Transverse colon (tissue), 4 donors: ENCODE measurements at regions of chr22 and their contacts with region 1.

Region 1: DNA sequence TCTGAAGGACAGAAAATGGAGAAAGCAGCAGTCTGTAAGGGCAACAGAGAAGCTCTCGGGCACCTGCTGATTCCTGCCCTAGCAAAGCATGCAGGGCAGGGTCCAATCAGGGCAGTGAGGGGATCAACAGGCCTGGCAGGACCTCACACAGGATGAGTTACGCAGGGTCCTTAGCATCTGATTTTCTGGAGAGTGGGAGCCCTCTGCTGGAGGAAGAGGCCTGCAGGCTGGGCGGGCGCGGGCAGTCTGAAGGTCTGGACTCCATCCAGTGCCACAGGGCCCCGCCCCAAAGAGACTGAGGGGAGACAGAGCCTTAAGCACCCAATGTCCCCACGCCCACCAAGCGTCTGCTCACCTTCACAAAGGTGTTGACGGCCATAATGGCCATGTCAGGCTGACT is 28.9 kb downstream of the AP1B1 start:
- DNase-seq: peak; percentile 57
- H3K4me3 ChIP-seq: no peak overlapping the region
- H3K27ac ChIP-seq: peak overlapping the region in 1 of 4 donors; percentile 4
- H3K4me1 ChIP-seq: peaks cover 9 to 30% (median 13%) of the 10 kb centered on the region in 4 donors
- H3K27me3 ChIP-seq: no peaks in the 10 kb centered on the region
- CTCF ChIP-seq: peak; percentile 51 to 65 (median 56)
- EP300 ChIP-seq: no peak
- POLR2A ChIP-seq: no peak

Region 2: GRCh38 chr22:29225422-29226131 is 133.9 kb before region 1 on chr22:
- in situ Hi-C with region 1: no loop called
- intact Hi-C with region 1: no loop called
- DNase-seq: peak; percentile 33
- H3K4me3 ChIP-seq: no peak overlapping the region
- H3K27ac ChIP-seq: peak overlapping the region; percentile 57 to 69 (median 62)
- H3K4me1 ChIP-seq: peaks cover 0 to 16% (median 6%) of the 10 kb centered on the region in 4 donors
- H3K27me3 ChIP-seq: no peaks in the 10 kb centered on the region
- CTCF ChIP-seq: no peak
- EP300 ChIP-seq: no peak
- POLR2A ChIP-seq: no peak

Region 3: DNA sequence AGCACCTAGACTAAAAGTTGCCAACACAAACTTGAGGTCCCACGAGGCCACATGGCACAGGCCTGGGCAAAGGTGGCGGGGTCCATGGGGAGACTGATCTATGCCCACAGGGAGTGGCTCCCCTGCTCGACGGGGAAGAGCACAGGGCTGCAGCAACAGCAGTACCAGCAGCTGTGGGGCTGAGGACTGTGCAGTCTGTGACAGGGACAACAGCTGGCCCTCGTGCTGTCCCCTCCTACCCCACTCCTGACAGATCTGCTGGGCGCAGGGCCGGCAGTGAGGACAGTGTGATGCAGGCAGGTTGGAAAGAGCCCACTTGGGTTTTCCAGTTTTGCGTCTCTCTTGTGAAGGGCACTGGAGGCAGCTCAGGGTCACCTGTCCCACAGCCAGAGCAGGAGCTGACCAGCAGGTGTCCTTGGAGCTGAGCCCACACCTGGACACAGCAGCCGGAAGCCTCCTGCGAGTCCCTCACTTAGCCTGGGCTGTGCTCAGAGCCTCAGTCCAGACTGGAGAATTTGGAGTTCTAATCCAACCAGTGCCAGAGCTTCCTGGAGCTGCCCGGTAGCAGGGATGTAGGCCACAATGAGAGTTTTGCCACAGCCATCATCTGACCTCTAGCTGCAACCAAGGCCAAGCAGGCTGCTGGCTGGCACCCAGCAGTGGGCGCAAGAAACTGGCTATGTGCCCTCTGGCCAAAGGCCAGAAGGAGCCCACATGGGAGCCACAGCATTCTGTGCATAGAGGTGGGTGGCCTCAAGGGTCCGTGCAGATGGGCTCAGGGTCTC is 56.6 kb before region 1 on chr22:
- in situ Hi-C with region 1: no loop called
- intact Hi-C with region 1: loop called (anchors 2 kb)
- DNase-seq: no peak
- H3K4me3 ChIP-seq: no peak overlapping the region
- H3K27ac ChIP-seq: peak overlapping the region in 1 of 4 donors; percentile 11
- H3K4me1 ChIP-seq: peaks cover 5 to 27% (median 20%) of the 10 kb centered on the region in 4 donors
- H3K27me3 ChIP-seq: no peaks in the 10 kb centered on the region
- CTCF ChIP-seq: no peak
- EP300 ChIP-seq: no peak
- POLR2A ChIP-seq: no peak

Region 4: DNA sequence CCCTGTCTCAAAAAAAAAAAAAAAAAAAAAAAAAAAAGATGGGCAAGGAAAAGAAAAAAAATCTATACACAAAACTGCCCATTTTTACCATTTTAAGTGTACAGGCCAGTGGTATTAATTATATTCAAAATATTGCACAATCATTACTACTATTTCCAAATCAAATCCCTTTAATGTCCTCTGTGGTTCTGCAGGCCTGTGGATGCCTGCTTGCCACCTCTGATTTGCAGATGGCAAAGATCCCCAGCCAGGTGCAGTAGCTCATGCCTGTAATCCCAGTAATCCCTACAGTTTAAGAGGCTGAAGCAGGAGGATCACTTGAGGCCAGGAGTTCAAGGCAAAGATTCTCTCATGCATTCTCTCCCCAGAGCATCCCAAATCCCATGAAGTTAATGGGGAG is 99.1 kb after region 1 on chr22:
- in situ Hi-C with region 1: no loop called
- intact Hi-C with region 1: no loop called
- DNase-seq: no peak
- H3K4me3 ChIP-seq: no peak overlapping the region
- H3K27ac ChIP-seq: no peak overlapping the region
- H3K4me1 ChIP-seq: no peaks in the 10 kb centered on the region
- H3K27me3 ChIP-seq: no peaks in the 10 kb centered on the region
- CTCF ChIP-seq: no peak
- EP300 ChIP-seq: no peak
- POLR2A ChIP-seq: no peak